ENCODE measurements at regions of chr17 and their contacts with region 1.

Region 1: GRCh38 chr17:75430159-75430974 is 24.9 kb upstream of the GRB2 start:
- DNase-seq: no peak
- ATAC-seq: peak; percentile 42
- H3K4me3 ChIP-seq: peak overlapping the region in 1 of 2 experiments; percentile 16; a peak in 1 of 4 replicates
- H3K27ac ChIP-seq: peak overlapping the region; percentile 48
- H3K4me1 ChIP-seq: peaks cover 21% of the 10 kb centered on the region
- H3K27me3 ChIP-seq: no peaks in the 10 kb centered on the region
- CTCF ChIP-seq: no peak

Region 2: DNA sequence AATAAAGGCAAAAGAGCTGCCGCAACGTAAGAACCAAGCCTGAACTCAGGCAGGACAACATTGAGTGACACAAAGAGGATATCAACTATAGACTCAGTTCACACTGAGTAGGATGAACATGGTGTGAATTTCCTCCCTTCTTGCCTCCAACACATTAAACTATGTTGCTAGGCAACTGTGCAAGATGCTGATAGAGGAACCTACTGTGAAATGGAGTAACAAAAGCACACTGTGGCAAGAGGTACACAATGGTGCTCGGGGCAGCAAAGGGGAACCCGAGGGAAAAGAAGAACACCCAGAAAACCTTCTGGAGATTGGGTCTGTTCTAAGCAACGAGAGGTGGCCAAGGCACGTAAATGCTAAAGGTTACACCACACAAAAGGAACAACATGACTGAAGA is 59.0 kb before region 1 on chr17:
- CTCF ChIA-PET with region 1: no interaction called
- POLR2A ChIA-PET with region 1: no interaction called
- in situ Hi-C with region 1: no loop called
- intact Hi-C with region 1: no loop called
- DNase-seq: no peak
- ATAC-seq: no peak
- H3K4me3 ChIP-seq: no peak overlapping the region
- H3K27ac ChIP-seq: no peak overlapping the region
- H3K4me1 ChIP-seq: peaks cover 18% of the 10 kb centered on the region
- H3K27me3 ChIP-seq: no peaks in the 10 kb centered on the region
- CTCF ChIP-seq: no peak

Region 3: GRCh38 chr17:75447951-75448856 is 17.8 kb after region 1 on chr17:
- CTCF ChIA-PET with region 1: no interaction called
- POLR2A ChIA-PET with region 1: no interaction called
- in situ Hi-C with region 1: no loop called
- intact Hi-C with region 1: no loop called
- DNase-seq: no peak
- ATAC-seq: no peak
- H3K4me3 ChIP-seq: no peak overlapping the region
- H3K27ac ChIP-seq: no peak overlapping the region
- H3K4me1 ChIP-seq: no peaks in the 10 kb centered on the region
- H3K27me3 ChIP-seq: no peaks in the 10 kb centered on the region
- CTCF ChIP-seq: no peak

Region 4: GRCh38 chr17:75498726-75499213 is 68.4 kb after region 1 on chr17:
- CTCF ChIA-PET with region 1: no interaction called
- POLR2A ChIA-PET with region 1: no interaction called
- in situ Hi-C with region 1: no loop called
- intact Hi-C with region 1: no loop called
- DNase-seq: no peak
- ATAC-seq: peak; percentile 18; the same call in 1 of the 2 replicates
- H3K4me3 ChIP-seq: no peak overlapping the region
- H3K27ac ChIP-seq: no peak overlapping the region
- H3K4me1 ChIP-seq: peaks cover 9% of the 10 kb centered on the region; the same call in 1 of the 2 replicates
- H3K27me3 ChIP-seq: no peaks in the 10 kb centered on the region
- CTCF ChIP-seq: no peak

Region 5: GRCh38 chr17:75509528-75510258 is 79.3 kb after region 1 on chr17:
- CTCF ChIA-PET with region 1: interaction called, 5 read pairs
- POLR2A ChIA-PET with region 1: no interaction called
- in situ Hi-C with region 1: no loop called
- intact Hi-C with region 1: loop called (anchors 5 kb)
- DNase-seq: no peak
- ATAC-seq: no peak
- H3K4me3 ChIP-seq: no peak overlapping the region
- H3K27ac ChIP-seq: no peak overlapping the region
- H3K4me1 ChIP-seq: peaks cover 42% of the 10 kb centered on the region
- H3K27me3 ChIP-seq: no peaks in the 10 kb centered on the region
- CTCF ChIP-seq: no peak

Region 6: GRCh38 chr17:75515496-75516254 is 85.3 kb after region 1 on chr17 and contains the start of gene CASKIN2:
- CTCF ChIA-PET with region 1: interaction called, 12 read pairs
- POLR2A ChIA-PET with region 1: no interaction called
- in situ Hi-C with region 1: no loop called
- intact Hi-C with region 1: no loop called
- DNase-seq: peak; percentile 41
- ATAC-seq: peak; percentile 84
- H3K4me3 ChIP-seq: peak within 1 kb of the TSS; percentile 72 to 82
- H3K27ac ChIP-seq: peak within 1 kb of the TSS; percentile 80
- H3K4me1 ChIP-seq: peaks cover 38% of the 10 kb centered on the region
- H3K27me3 ChIP-seq: no peaks in the 10 kb centered on the region
- CTCF ChIP-seq: peak; percentile 100
- total RNA-seq, gene CASKIN2: 40.0 TPM

Region 7: GRCh38 chr17:75524953-75525719 is 94.8 kb after region 1 on chr17 and contains the start of gene LLGL2:
- CTCF ChIA-PET with region 1: no interaction called
- POLR2A ChIA-PET with region 1: interaction called, 11 read pairs
- in situ Hi-C with region 1: no loop called
- intact Hi-C with region 1: no loop called
- DNase-seq: no peak
- ATAC-seq: peak; percentile 88
- H3K4me3 ChIP-seq: peak within 1 kb of the TSS; percentile 68 to 75
- H3K27ac ChIP-seq: peak within 1 kb of the TSS; percentile 81
- H3K4me1 ChIP-seq: peaks cover 13% of the 10 kb centered on the region
- H3K27me3 ChIP-seq: no peaks in the 10 kb centered on the region
- CTCF ChIP-seq: no peak; the same call in 1 of the 2 replicates
- total RNA-seq, gene LLGL2: 201 TPM